K562 (cell line): ENCODE measurements at regions of chr17 and their contacts with region 1.

Region 1: GRCh38 chr17:1516388-1517161 is at the start of gene INPP5K:
- DNase-seq: peak; percentile 90 to 96 (median 93)
- ATAC-seq: peak; percentile 98
- H3K4me3 ChIP-seq: peak within 1 kb of the TSS; percentile 92
- H3K27ac ChIP-seq: peak within 1 kb of the TSS; percentile 92
- H3K4me1 ChIP-seq: peaks cover 15% of the 10 kb centered on the region in 2 experiments; a peak in 4 of 5 replicates
- H3K27me3 ChIP-seq: no peaks in the 10 kb centered on the region
- CTCF ChIP-seq: no peak
- EP300 ChIP-seq: no peak
- POLR2A ChIP-seq: peak; percentile 89
- RAD21 ChIP-seq: no peak
- polyA plus RNA-seq, gene INPP5K: 0.63 to 1.0 TPM

Region 2: GRCh38 chr17:1275962-1276736 is 240.4 kb before region 1 on chr17:
- CTCF ChIA-PET with region 1: interaction called, 6 read pairs
- POLR2A ChIA-PET with region 1: no interaction called
- in situ Hi-C with region 1: loop called (anchors 10 kb)
- intact Hi-C with region 1: loop called (anchors 10 kb)
- DNase-seq: peak; percentile 60 to 65 (median 62)
- ATAC-seq: peak; percentile 92
- H3K4me3 ChIP-seq: no peak overlapping the region
- H3K27ac ChIP-seq: no peak overlapping the region
- H3K4me1 ChIP-seq: peaks cover 0 to 14% of the 10 kb centered on the region in 2 experiments; a peak in 2 of 5 replicates
- H3K27me3 ChIP-seq: peaks cover 0 to 28% of the 10 kb centered on the region in 2 experiments; a peak in 4 of 5 replicates
- CTCF ChIP-seq: peak; percentile 62 to 75 (median 74)
- EP300 ChIP-seq: no peak
- POLR2A ChIP-seq: no peak
- RAD21 ChIP-seq: peak; percentile 52 to 78

Region 3: GRCh38 chr17:1365445-1366039 is 151.0 kb before region 1 on chr17:
- CTCF ChIA-PET with region 1: interaction called, 12 read pairs
- POLR2A ChIA-PET with region 1: interaction called, 9 read pairs
- in situ Hi-C with region 1: no loop called
- intact Hi-C with region 1: loop called (anchors 1 kb)
- DNase-seq: peak; percentile 40 to 71 (median 45)
- ATAC-seq: peak; percentile 87
- H3K4me3 ChIP-seq: no peak overlapping the region
- H3K27ac ChIP-seq: no peak overlapping the region
- H3K4me1 ChIP-seq: no peaks in the 10 kb centered on the region; a peak in 1 of 5 replicates
- H3K27me3 ChIP-seq: no peaks in the 10 kb centered on the region
- CTCF ChIP-seq: peak; percentile 68 to 75 (median 74)
- EP300 ChIP-seq: no peak
- POLR2A ChIP-seq: no peak
- RAD21 ChIP-seq: peak; percentile 70 to 75

Region 4: DNA sequence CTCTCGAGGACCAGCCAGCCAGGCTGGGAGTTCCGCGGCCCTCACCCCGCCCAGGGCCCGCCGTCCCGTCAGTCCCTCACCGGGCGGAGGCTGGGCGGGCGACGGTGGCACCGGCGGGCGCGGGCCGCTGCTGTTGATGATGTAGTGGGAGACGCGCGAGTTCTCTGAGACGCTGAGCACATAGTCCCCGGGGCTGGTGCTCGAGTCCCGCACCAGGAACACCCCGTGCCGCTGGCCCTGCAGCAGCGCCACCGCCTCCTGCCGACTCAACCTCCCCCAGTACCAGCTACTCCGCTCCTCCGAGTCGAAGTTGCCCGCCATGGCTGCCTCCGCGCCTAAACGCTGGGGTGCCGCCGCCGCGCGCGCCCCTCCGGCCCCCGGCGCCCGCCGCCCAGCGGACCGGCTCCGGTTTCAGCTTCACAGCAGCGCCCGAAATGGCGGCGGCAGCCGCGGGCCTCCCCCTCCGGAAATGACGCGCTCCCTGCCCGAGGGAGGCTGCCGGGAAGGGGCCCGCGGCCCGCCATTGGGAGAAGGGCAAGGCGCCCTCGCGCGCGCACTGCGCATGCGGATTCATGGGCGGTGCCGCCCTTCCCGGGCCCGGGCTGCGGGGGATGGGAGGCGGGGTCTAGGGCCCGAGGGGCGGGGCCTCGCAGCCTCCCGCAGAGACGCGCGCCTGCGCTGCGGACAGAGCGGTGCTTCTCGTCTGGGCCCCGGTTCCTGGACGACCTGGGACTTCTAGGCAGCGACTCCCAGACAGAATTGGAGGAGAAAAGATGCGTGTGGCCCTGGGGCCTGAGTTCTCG is 60.6 kb before region 1 on chr17 and contains the start of gene CRK:
- CTCF ChIA-PET with region 1: no interaction called
- POLR2A ChIA-PET with region 1: interaction called, 3 read pairs
- in situ Hi-C with region 1: no loop called
- intact Hi-C with region 1: loop called (anchors 10 kb)
- DNase-seq: peak; percentile 94 to 98 (median 98)
- ATAC-seq: peak; percentile 90
- H3K4me3 ChIP-seq: peak within 1 kb of the TSS; percentile 97
- H3K27ac ChIP-seq: peak within 1 kb of the TSS; percentile 86
- H3K4me1 ChIP-seq: peaks cover 13 to 20% of the 10 kb centered on the region in 2 experiments
- H3K27me3 ChIP-seq: no peaks in the 10 kb centered on the region
- CTCF ChIP-seq: peak in 1 of 3 experiments; percentile 18; a peak in 2 of 6 replicates
- EP300 ChIP-seq: peak; percentile 29; the same call in 1 of the 2 replicates
- POLR2A ChIP-seq: peak; percentile 90
- RAD21 ChIP-seq: no peak
- polyA plus RNA-seq, gene CRK: 13.1 to 17.7 TPM

Region 5: DNA sequence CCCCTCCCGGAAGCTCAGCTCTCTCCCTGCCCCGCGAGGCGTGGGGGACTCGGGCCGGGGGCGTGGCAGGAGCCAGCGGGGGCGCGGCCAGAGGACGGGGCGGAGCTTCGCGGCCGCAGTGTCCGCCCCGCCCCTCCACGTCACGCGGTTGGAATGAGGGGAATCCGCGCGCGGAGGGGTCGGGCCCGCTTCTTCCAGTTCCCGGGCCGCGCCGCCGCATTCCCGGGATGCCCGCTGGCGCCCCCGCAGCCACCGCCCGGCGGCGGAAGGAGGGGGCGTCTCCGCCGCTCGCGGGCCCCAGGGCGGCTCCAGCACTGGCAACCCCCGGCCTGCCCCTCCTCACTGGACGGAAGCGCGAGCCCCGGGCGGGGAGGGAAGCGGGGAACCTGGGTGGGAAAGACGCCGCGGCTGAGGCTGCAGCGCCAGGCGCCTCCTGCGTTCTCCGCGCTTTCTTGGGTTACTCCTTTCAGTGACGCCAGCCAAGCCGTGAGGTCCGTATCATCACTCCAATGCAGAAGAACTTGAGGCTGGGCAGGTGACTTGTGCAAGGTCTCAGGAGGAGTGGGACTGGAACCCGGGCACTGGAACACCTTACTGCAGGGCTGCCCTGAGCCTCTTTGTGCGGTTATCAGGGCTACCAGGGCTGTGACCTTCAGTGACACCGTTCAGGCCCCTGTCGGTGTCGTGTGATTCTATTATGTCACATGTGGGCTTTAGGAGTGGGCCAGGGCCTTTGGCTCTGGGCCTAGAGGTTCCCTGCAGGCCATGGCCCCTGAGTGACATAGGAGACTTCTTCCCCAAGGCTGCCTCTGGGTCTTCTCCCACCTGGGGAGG is 28.3 kb before region 1 on chr17:
- CTCF ChIA-PET with region 1: no interaction called
- POLR2A ChIA-PET with region 1: interaction called, 7 read pairs
- in situ Hi-C with region 1: no loop called
- intact Hi-C with region 1: loop called (anchors 2 kb)
- DNase-seq: peak; percentile 67 to 78 (median 72)
- ATAC-seq: peak; percentile 63
- H3K4me3 ChIP-seq: peak overlapping the region; percentile 46
- H3K27ac ChIP-seq: peak overlapping the region; percentile 72; the same call in 2 of the 3 replicates
- H3K4me1 ChIP-seq: peaks cover 13 to 84% of the 10 kb centered on the region in 2 experiments; a peak in 4 of 5 replicates
- H3K27me3 ChIP-seq: no peaks in the 10 kb centered on the region
- CTCF ChIP-seq: no peak
- EP300 ChIP-seq: no peak
- POLR2A ChIP-seq: no peak
- RAD21 ChIP-seq: no peak